ENCODE measurements at regions of chr5 and their contacts with region 1.

Region 1: GRCh38 chr5:37412515-37413277 is 33.6 kb downstream of the WDR70 start:
- DNase-seq: no peak
- H3K4me3 ChIP-seq: no peak overlapping the region
- H3K27ac ChIP-seq: no peak overlapping the region
- H3K4me1 ChIP-seq: peaks cover 0 to 6% (median 0%) of the 10 kb centered on the region in 4 donors
- H3K27me3 ChIP-seq: no peaks in the 10 kb centered on the region
- CTCF ChIP-seq: peak; percentile 77 to 92 (median 85)
- EP300 ChIP-seq: no peak
- POLR2A ChIP-seq: no peak

Region 2: GRCh38 chr5:37375091-37375490 is 37.6 kb before region 1 on chr5:
- intact Hi-C with region 1: no loop called
- DNase-seq: no peak
- H3K4me3 ChIP-seq: no peak overlapping the region
- H3K27ac ChIP-seq: no peak overlapping the region
- H3K4me1 ChIP-seq: peaks cover 11 to 21% (median 16%) of the 10 kb centered on the region in 4 donors
- H3K27me3 ChIP-seq: no peaks in the 10 kb centered on the region
- CTCF ChIP-seq: no peak
- EP300 ChIP-seq: no peak
- POLR2A ChIP-seq: no peak

Region 3: GRCh38 chr5:38193015-38193581 is 780.4 kb after region 1 on chr5:
- intact Hi-C with region 1: loop called (anchors 5 kb)
- DNase-seq: no peak
- H3K4me3 ChIP-seq: no peak overlapping the region
- H3K27ac ChIP-seq: no peak overlapping the region
- H3K4me1 ChIP-seq: no peaks in the 10 kb centered on the region
- H3K27me3 ChIP-seq: no peaks in the 10 kb centered on the region
- CTCF ChIP-seq: peak; percentile 88 to 93 (median 88)
- EP300 ChIP-seq: no peak
- POLR2A ChIP-seq: no peak

Measured in esophagus muscularis mucosa (tissue), 4 donors.